AG04449 (cell line): ENCODE measurements at regions of chr1 and their contacts with region 1.

Region 1: DNA sequence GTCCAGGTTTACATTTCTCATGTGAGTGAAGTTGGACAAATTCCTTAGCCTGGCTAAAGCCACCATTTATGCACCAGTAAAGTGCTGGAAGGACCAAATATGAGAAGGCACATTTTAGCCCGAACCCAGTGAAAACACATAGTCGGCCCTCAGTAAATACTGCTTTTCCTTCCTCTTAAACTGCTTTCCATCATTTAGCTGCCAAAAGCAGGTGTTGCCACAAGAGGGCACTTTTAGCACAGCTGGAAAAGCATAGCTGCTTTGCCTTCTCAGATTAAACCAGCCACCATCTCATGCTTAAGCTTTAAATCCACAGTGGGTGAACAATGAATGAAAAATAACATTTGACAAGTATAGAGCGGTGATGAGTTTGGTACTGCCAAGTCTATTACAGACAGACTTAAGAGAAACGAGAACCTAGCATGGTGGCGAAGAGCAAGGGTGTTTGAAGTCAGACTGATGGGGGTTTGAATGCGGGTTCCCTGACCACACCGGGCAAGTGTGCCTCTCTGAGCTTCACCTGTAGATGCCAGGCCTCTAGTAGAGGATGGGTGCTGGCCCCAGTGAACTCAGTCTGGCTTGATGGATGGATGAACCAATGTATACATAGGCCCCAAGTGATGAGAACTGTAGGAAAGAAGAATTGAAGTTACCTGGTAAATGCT is 57.8 kb downstream of the SLC35D1 start:
- DNase-seq: no peak
- H3K4me3 ChIP-seq: no peak overlapping the region
- CTCF ChIP-seq: peak; percentile 83

Region 2: DNA sequence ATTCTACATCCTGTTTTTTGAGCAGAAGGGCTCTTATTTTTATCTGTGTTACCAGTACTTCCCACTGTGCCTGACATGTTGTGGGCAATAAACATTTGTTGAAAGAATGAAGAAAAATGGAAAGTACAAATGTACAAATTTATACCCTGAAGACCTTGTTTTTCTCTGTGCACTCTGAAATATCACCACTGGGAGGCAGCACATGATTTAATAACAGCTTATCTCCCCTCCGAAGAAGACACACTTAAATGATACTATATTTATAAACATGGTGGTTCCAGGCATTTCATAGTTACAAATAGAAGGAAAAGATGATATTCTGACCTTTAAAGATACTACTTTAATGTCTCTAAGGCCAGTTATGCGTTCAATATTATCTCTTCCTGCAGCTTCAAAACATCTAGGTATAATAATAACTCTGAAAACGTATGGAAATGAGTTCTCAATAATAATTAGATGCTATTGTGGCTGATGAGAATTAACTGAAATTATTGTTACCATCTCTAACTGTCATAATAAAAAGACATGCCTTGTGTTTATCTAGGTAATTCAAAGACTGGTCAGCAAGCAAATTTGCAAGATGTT is 231.1 kb before region 1 on chr1:
- CTCF ChIA-PET with region 1: interaction called, 26 read pairs
- POLR2A ChIA-PET with region 1: no interaction called
- DNase-seq: peak; percentile 10
- H3K4me3 ChIP-seq: no peak overlapping the region
- CTCF ChIP-seq: peak; percentile 50

Region 3: GRCh38 chr1:66957938-66958337 is 38.2 kb before region 1 on chr1:
- CTCF ChIA-PET with region 1: no interaction called
- POLR2A ChIA-PET with region 1: no interaction called
- DNase-seq: no peak
- H3K4me3 ChIP-seq: no peak overlapping the region
- CTCF ChIP-seq: no peak

Region 4: DNA sequence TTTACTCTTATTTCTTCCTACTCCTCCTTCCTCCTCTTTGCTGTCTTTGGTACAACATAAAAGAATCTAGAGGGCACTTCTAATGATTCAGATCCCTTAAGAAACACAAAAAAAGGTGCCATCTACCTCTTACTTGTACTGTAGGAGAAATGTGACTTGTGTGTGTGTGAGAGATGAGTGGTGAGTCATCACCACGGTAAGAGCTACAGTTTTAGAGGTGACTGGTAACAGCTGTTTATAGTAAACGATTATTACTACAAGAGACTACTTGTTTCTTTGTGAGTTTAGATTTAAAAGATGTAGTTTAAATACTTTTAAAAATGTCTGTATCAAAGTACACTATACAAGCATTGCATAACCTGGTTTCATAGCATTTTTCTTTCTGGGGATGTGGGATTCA is 17.4 kb after region 1 on chr1:
- CTCF ChIA-PET with region 1: interaction called, 17 read pairs
- POLR2A ChIA-PET with region 1: no interaction called
- DNase-seq: no peak
- H3K4me3 ChIP-seq: no peak overlapping the region
- CTCF ChIP-seq: no peak

Region 5: GRCh38 chr1:67053785-67054772 is 57.9 kb after region 1 on chr1 and contains the start of gene SLC35D1:
- CTCF ChIA-PET with region 1: interaction called, 24 read pairs
- POLR2A ChIA-PET with region 1: no interaction called
- DNase-seq: no peak
- H3K4me3 ChIP-seq: peak within 1 kb of the TSS; percentile 83
- CTCF ChIP-seq: no peak

Region 6: DNA sequence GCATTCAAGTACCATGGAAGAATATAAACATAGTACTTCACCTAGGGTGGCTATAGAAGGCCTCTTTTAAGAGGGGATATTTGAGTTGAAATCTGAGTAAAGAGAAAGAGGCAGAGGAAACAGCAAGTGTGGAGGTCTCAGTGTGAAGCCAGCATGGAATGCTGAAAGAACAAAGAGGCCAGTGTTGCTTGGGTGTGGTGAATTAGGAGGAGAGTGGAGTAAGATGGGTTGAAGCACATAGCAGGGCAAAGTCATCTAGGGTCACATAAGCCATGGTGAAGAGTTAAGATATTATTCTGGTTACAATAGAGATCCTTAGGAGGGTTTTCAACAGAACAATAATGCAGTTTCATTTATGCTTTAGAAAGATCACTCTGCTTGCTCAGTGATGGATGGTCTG is 101.2 kb after region 1 on chr1:
- CTCF ChIA-PET with region 1: no interaction called
- POLR2A ChIA-PET with region 1: no interaction called
- DNase-seq: no peak
- H3K4me3 ChIP-seq: no peak overlapping the region
- CTCF ChIP-seq: no peak

Region 7: GRCh38 chr1:67140460-67140859 is 144.3 kb after region 1 on chr1:
- CTCF ChIA-PET with region 1: interaction called, 449 read pairs
- POLR2A ChIA-PET with region 1: no interaction called
- DNase-seq: no peak
- H3K4me3 ChIP-seq: no peak overlapping the region
- CTCF ChIP-seq: no peak